ENCODE measurements at regions of chr1 and their contacts with region 1.

Region 1: DNA sequence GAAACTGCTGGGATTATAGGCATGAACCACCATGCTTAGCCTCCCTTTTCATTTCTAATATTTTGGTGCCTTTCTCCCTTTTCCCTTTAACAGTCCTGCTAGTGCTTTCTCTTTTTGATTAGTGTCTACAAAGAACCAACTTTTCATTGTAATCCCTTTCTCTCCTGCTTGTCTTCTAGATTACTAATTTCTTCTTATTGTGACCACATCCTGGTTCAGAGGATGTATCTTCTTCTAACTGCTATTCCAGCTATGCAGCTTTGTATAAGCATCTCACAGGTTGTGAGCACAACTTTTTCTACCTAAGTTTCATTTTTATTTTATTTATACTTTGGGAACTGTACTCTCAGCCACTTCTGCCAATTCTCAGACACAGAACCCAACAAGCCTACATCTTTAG is 14.7 kb downstream of the ZNF648 start:
- DNase-seq: no peak
- H3K4me3 Mint-ChIP-seq: peak overlapping the region; percentile 39
- H3K27ac Mint-ChIP-seq: peak overlapping the region; percentile 45
- H3K4me1 Mint-ChIP-seq: peaks cover 34% of the 10 kb centered on the region
- H3K27me3 Mint-ChIP-seq: no peaks in the 10 kb centered on the region

Region 2: DNA sequence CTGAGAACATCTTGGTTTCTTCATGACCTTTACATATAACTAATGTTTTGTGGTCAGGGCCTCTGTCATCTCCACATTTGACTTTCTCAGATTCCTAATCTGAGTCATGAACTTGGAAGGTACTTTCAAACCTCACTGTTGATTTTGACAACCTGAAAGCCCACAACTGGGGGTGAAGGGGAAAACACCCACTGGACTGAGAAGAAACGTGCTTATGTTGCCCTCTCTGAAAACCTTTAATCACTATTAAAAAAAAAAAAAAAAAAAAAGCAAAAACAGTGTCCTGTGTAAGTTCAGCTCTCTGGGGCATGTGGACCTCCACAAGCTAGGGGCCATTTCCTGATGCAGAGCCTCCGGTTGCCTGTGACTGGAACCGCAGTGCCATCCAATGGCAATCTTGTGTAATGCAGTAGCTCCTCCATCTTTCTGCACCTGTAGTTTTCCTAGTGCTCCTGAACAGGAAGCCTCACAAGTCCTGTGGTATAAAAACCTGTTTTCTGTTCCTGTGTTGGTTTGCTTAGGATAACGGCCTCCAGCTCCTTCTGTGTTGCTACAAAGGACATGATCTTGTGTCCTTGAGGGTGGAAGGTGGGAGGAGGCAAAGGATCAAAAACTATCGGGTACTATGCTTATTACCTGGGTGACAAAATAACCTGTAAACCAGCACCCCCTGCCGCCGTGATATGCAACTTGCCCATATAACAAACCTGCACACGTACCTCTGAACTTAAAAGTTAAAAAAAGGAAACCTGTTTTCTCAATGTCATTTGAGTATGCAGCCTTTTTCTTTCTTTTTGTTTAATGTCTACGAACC is 109.8 kb before region 1 on chr1:
- intact Hi-C with region 1: loop called (anchors 5 kb)
- DNase-seq: peak; percentile 76
- H3K4me3 Mint-ChIP-seq: no peak overlapping the region
- H3K27ac Mint-ChIP-seq: no peak overlapping the region
- H3K4me1 Mint-ChIP-seq: no peaks in the 10 kb centered on the region
- H3K27me3 Mint-ChIP-seq: peaks cover 6% of the 10 kb centered on the region

Measured in activated CD4-positive, alpha-beta T cell treated with anti-CD3 and anti-CD28 coated beads, Interleukin-2, amount 10 ng/mL, durations not matched to agents 24 days and 14 days (primary cell).